Left colon (tissue), 2 donors: ENCODE measurements at regions of chr11 and their contacts with region 1.

Region 1: GRCh38 chr11:126989942-126990715 is 10.4 kb downstream of the KIRREL3 start:
- DNase-seq: peak; percentile 46 to 72
- ATAC-seq: peak; percentile 83

Region 2: DNA sequence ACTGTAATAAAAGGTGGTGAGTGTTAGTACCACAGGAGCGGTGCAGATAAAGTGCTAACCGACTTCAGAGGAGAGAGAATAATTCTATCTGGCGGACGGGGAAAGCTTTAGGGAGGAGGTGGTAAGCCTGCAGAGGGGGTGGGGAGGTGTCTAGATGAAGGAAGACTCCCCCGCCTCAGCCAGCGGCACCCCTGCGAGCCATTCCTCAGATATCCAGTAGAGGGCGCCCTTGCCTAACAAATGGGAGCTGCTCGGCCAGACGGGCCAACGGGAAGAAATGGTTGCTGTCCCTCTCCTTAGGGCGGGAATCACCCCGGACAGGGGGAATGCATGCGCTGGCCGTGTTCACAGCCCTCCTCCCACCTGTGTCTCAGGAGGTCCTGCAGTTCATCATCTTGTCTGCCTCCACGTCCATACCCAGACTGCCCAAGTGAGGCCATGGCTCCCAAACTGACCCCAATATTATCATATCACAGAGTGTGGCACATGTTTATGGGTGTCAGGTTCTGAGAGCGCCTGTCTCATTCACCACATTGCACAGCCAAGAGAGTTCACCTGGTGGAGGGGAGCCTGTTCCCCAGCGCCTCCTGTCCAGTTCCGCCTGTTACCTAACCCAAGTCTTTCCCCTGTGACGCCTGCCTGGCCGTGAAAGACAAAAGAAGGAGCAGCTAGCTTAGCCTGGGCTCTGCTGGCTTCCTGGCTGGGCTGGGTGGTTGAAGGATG is 549.2 kb before region 1 on chr11:
- intact Hi-C with region 1: loop called in 1 of 2 experiments (anchors 10 kb)
- DNase-seq: peak; percentile 70 to 77
- ATAC-seq: peak; percentile 89

Region 3: DNA sequence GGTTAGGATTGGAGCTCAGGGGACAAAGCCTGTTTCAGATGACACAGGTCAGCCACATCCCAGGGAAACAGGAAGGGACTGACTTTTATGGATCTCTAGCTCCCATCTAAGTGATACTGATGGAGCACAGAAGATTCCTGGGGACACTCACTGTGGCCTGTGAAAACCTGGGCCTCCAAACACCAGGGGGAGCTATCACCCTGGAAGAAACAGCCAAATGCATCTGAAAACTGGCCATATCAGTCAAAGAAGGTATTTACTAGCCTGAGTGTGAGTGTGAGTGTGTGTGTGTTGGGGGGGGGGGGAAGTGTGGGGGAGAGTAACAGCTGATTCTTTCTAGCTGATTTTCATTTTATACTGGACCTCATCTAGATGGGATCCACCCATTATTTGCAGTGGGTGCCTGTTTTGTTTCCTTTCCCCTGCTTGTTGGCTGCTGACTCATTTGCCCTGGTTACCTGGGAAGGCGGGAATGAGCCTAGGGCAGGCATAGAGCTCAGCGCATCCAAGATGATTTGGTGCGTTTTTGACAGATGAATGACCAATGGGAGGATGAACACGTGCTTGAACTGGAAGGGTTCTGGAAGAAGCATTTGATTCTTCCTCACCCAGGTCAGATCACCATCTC is 273.6 kb before region 1 on chr11:
- intact Hi-C with region 1: loop called in 1 of 2 experiments (anchors 5 kb)
- DNase-seq: peak; percentile 33 to 63
- ATAC-seq: peak; percentile 51

Region 4: GRCh38 chr11:126929179-126930061 is 60.7 kb before region 1 on chr11:
- intact Hi-C with region 1: no loop called
- DNase-seq: no peak
- ATAC-seq: no peak

Region 5: DNA sequence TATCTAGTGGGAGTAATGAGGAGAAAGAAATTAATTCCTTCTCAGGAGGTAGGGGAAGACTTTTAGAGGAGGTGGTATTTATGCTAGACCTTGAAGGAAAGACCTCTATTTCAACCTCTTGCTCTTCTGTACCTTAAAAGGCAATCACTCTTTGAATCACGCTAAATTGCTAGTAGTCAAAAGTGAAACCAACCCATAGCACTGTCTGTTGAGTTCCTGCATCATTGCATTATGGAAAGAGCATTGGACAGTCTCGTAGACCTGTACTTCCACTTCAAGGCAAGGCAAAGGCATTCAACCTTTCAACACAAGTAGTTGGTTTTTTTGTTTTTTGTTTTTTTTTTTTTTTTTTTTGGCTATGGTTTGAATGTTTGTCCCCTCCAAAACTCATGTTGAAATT is 826.8 kb after region 1 on chr11:
- intact Hi-C with region 1: no loop called
- DNase-seq: no peak
- ATAC-seq: peak; percentile 66